ENCODE measurements at regions of chr22 and their contacts with region 1.

Region 1: DNA sequence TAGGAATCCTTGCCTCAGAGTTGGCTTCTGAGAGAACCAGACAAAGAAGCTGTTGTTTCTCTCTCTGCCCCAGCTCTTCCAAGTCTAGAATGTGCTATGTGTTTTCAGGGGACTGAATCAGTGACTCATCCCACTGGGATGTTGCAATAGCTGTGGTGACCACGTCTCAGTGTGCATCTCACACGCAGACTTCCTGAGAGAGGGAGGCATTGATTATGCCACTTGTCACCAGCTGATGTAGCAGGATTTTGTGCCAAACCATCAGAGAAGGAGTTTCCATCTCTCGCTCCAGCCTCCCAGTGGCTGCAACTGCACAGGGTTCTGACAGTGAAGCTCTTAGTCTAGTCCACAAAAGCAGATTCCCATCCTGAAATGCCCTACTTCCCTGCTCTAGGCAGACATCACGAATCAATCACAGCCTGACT is 455.8 kb downstream of the MIAT start:
- DNase-seq: peak; percentile 95
- H3K4me3 ChIP-seq: no peak overlapping the region
- H3K27ac ChIP-seq: no peak overlapping the region
- H3K4me1 ChIP-seq: no peaks in the 10 kb centered on the region
- H3K27me3 ChIP-seq: peaks cover 16% of the 10 kb centered on the region
- CTCF ChIP-seq: no peak

Region 2: GRCh38 chr22:27124351-27124966 is 11.2 kb after region 1 on chr22:
- CTCF ChIA-PET with region 1: no interaction called
- dilution Hi-C with region 1: no loop called
- in situ Hi-C with region 1: no loop called
- intact Hi-C with region 1: loop called (anchors 1 kb)
- DNase-seq: no peak
- H3K4me3 ChIP-seq: no peak overlapping the region
- H3K27ac ChIP-seq: no peak overlapping the region
- H3K4me1 ChIP-seq: no peaks in the 10 kb centered on the region
- H3K27me3 ChIP-seq: peaks cover 10% of the 10 kb centered on the region
- CTCF ChIP-seq: no peak

Region 3: DNA sequence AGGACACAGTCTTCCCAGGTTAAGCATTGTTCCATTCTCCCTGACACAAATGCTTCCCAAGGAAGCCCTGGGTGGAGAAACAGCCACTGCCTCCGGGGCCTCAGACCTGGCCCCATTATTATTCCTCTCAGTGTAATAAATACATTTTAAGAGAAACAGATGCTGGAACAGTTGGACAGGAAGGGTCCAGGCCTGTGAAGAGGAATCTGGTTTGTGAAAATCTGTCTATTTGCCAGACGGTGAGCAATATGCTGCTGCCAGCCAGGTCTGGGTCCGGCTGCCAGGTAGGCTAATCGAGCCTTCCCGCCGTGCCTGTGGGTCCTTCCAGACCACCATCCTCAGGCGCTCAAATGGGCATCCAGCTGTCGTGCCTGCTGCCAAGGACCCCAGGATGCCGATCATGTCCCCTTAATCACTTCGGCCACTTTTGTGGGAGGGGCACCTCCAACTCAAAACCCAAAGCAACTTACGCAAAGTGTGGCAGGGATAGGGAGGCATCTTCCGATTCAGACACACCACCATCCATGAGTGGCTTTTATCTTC is 72.6 kb after region 1 on chr22:
- CTCF ChIA-PET with region 1: no interaction called
- dilution Hi-C with region 1: no loop called
- in situ Hi-C with region 1: no loop called
- intact Hi-C with region 1: no loop called
- DNase-seq: no peak
- H3K4me3 ChIP-seq: no peak overlapping the region
- H3K27ac ChIP-seq: no peak overlapping the region
- H3K4me1 ChIP-seq: no peaks in the 10 kb centered on the region
- H3K27me3 ChIP-seq: no peaks in the 10 kb centered on the region
- CTCF ChIP-seq: no peak

Measured in mammary epithelial cell (primary cell).